A673 (cell line): ENCODE measurements at regions of chr11 and their contacts with region 1.

Region 1: DNA sequence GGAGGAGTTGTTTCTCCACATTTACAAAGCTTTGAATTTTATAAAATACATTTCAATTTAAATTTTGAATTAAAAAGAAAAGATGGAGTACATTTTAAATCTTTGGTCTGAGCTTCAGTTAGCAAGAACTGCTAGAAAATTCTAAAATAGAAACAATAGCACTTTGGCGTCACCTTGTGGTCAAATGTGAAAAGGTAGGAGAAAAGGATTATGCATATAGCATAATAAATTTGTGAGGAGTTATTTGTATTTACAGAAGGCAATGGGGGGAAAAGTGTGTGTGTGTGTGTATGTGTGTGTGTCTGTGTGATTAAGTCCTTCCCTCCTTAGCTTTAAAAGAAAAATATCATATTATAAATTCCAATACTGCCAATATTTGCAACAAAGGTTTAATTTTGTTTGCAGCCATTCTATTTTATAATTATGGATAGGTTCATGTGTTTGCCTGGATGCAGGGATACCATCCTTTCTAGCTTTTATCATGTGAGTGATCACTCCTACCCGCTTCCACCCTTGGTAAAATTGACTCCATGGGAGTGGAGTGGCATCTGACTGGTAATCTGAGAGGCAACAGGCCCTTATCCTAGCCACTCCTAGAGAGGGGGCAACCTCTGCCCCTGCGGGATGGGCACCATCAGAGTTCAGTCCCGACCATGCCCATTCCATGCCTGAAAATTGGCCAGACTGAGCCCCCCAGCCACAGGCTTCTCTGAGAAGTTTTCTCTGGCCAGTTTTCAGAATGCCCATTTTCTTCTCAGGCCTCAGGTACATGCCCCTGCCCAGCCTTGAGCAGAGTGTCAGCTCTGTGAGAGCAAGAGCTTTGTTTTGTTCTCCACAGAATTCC is 13.6 kb upstream of the LGR4 start:
- DNase-seq: peak; percentile 93
- H3K4me3 ChIP-seq: no peak overlapping the region
- H3K27ac ChIP-seq: no peak overlapping the region
- H3K4me1 ChIP-seq: no peaks in the 10 kb centered on the region
- H3K27me3 ChIP-seq: no peaks in the 10 kb centered on the region
- CTCF ChIP-seq: peak; percentile 100

Region 2: GRCh38 chr11:26649884-26650283 is 836.3 kb before region 1 on chr11:
- CTCF ChIA-PET with region 1: no interaction called
- POLR2A ChIA-PET with region 1: no interaction called
- intact Hi-C with region 1: loop called (anchors 10 kb)
- DNase-seq: peak; percentile 97
- H3K4me3 ChIP-seq: no peak overlapping the region
- H3K27ac ChIP-seq: no peak overlapping the region
- H3K4me1 ChIP-seq: no peaks in the 10 kb centered on the region
- H3K27me3 ChIP-seq: peaks cover 86% of the 10 kb centered on the region
- CTCF ChIP-seq: peak; percentile 100

Region 3: GRCh38 chr11:26753723-26754504 is 732.2 kb before region 1 on chr11:
- CTCF ChIA-PET with region 1: interaction called, 5 read pairs
- POLR2A ChIA-PET with region 1: no interaction called
- intact Hi-C with region 1: loop called (anchors 1 kb)
- DNase-seq: peak; percentile 89
- H3K4me3 ChIP-seq: no peak overlapping the region
- H3K27ac ChIP-seq: no peak overlapping the region
- H3K4me1 ChIP-seq: no peaks in the 10 kb centered on the region
- H3K27me3 ChIP-seq: peaks cover 74% of the 10 kb centered on the region
- CTCF ChIP-seq: peak; percentile 100

Region 4: GRCh38 chr11:27296497-27296896 is 189.7 kb before region 1 on chr11:
- CTCF ChIA-PET with region 1: interaction called, 31 read pairs
- POLR2A ChIA-PET with region 1: no interaction called
- intact Hi-C with region 1: loop called (anchors 2 kb)
- DNase-seq: peak; percentile 91
- H3K4me3 ChIP-seq: no peak overlapping the region
- H3K27ac ChIP-seq: no peak overlapping the region
- H3K4me1 ChIP-seq: peaks cover 18% of the 10 kb centered on the region
- H3K27me3 ChIP-seq: no peaks in the 10 kb centered on the region
- CTCF ChIP-seq: peak; percentile 100

Region 5: GRCh38 chr11:27497284-27497866 is 11.2 kb after region 1 on chr11:
- CTCF ChIA-PET with region 1: interaction called, 15 read pairs
- POLR2A ChIA-PET with region 1: no interaction called
- intact Hi-C with region 1: no loop called
- DNase-seq: peak; percentile 84
- H3K4me3 ChIP-seq: no peak overlapping the region
- H3K27ac ChIP-seq: no peak overlapping the region
- H3K4me1 ChIP-seq: peaks cover 15% of the 10 kb centered on the region
- H3K27me3 ChIP-seq: no peaks in the 10 kb centered on the region
- CTCF ChIP-seq: peak; percentile 95